Left cardiac atrium (tissue), 4 donors: ENCODE measurements at regions of chr4 and their contacts with region 1.

Region 1: DNA sequence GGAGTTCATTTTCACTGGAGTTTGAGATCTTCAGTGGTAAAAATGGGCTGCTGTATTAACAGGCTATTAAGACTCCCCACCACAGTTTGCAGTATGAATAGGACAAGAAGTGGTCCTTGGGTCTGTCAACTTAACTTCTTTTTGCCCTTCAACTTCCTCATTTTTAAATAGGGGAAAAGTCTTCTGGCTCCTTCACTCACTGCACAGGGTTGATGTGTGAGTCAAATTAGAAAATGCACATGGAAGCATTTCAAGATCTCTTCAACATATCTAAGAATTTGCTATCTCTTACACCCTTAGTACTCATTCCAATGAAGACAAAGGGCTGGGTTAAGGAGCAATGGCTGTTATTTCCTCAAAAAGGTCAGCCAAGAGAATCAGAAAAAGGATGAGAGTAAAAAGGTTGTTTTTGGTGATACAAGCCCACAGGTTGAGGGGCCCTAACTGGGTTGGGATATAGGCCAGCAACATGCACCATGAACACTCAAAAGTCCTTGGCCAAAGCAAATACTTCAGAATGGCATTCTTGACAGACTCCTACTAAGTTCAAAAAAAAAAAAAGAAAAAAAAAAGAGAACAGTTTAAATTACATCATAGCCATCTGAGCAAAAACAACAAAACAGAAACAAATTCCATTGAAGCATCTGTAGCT is 13.4 kb downstream of the PDE5A start:
- DNase-seq: no peak
- ATAC-seq: peak; percentile 34 to 71

Region 2: GRCh38 chr4:119559044-119559647 is 56.0 kb before region 1 on chr4:
- intact Hi-C with region 1: loop called in 1 of 2 experiments (anchors 5 kb)
- DNase-seq: no peak
- ATAC-seq: no peak

Region 3: DNA sequence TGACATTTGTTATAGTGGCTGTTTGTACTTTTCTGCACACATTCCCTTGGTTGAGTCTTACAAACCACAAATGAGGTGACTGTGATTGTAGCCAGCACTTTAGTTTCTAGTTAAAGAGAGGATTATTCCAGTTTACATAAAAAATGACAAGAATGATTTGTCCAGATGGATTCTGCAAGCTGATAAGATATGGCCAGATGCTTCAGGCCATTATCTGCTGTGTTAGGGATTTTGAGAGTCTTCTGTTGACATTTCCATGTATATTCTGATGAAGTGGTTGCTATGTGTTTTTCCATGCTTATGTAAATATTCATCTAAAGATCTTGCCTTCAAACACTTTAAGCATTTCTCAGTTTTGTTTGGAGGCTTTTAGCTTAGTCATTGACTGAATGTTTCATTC is 44.4 kb after region 1 on chr4:
- intact Hi-C with region 1: no loop called
- DNase-seq: no peak
- ATAC-seq: no peak

Region 4: GRCh38 chr4:119861731-119862130 is 246.5 kb after region 1 on chr4:
- intact Hi-C with region 1: no loop called
- DNase-seq: no peak
- ATAC-seq: no peak